ENCODE measurements at regions of chr5 and their contacts with region 1.

Region 1: DNA sequence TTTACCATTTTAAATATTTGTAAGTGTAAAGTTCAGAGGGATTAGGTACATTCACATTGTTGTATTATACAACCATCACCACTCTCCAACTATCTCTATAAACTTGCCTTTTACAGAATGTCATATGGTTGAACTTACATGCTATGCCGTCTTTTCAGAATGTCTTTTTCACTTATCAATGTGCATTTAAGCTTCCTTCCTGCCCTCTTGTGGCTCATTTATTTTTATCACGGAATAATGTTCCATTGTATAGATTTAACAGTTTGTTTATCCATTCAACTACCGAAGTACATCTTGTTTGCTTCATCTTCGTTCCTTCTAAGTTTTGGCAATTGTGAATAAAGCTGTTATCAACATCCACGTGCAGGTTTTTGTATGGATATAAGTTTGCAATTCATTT is 133.3 kb upstream of the C6 start:
- DNase-seq: no peak
- H3K4me3 ChIP-seq: no peak overlapping the region
- CTCF ChIP-seq: no peak

Region 2: DNA sequence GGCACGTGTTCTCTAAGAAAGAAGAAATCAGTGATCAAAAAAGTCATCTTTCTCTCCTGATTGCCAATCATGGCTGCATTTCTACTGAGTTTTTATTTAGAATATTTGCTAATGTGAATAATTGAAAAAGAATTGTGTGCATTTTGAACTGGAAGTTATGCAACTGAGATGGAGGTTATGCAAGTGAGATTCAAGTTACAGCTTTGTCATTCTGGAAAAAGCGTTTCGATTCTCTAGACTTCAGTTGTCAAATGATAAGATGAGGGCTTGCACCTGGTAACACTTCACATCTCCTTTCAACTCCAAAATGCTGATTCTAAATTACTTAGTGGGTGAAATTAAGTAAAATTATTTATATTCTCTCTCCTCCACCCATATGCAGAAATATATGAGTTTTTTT is 169.7 kb before region 1 on chr5:
- CTCF ChIA-PET with region 1: no interaction called
- POLR2A ChIA-PET with region 1: no interaction called
- DNase-seq: no peak
- H3K4me3 ChIP-seq: no peak overlapping the region
- CTCF ChIP-seq: no peak

Region 3: GRCh38 chr5:41312478-41313060 is 34.0 kb before region 1 on chr5:
- CTCF ChIA-PET with region 1: no interaction called
- POLR2A ChIA-PET with region 1: no interaction called
- DNase-seq: no peak
- H3K4me3 ChIP-seq: no peak overlapping the region
- CTCF ChIP-seq: no peak

Region 4: DNA sequence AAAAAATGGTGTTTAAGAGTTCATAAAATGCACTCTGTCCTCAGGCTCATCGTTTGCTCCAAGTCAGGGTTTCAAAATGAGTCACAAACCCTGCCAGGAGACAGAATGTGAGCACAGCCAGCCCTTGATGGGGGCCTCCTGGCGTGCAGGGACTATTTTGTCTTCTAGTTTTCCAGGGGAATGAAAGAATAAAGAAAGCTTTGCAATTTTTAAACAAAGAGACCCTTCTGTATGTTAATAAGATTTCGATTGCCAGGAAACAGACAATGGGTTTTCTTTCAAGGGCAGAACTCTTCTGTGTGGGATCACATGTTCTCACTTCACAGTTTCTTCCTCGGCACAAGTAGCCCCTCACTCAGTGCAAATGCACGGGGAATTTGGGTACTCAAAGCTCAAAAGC is 11.9 kb before region 1 on chr5:
- CTCF ChIA-PET with region 1: no interaction called
- POLR2A ChIA-PET with region 1: no interaction called
- DNase-seq: no peak
- H3K4me3 ChIP-seq: no peak overlapping the region
- CTCF ChIP-seq: no peak

Region 5: GRCh38 chr5:41364346-41364745 is 17.7 kb after region 1 on chr5:
- CTCF ChIA-PET with region 1: no interaction called
- POLR2A ChIA-PET with region 1: no interaction called
- DNase-seq: no peak
- H3K4me3 ChIP-seq: no peak overlapping the region
- CTCF ChIP-seq: no peak

Region 6: DNA sequence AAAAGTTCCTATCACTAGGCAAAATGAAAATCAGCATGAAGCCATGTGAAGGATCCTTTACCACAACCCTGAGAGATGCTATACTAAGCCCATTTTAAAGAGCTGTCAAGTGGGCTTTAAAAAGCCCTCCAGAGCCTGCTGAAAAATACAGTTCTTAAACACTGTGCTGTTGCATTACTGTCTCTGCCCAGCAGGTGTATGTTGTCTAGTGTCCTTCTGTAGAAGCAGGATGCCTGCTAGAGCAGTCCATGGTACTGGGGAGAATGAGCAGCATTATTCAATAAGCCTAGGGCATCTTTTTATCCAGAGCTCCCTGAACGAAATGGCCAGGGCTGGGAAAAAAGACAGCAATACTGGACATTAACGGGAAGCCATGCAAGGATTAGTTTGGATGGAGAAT is 290.0 kb after region 1 on chr5:
- CTCF ChIA-PET with region 1: interaction called, 16 read pairs
- POLR2A ChIA-PET with region 1: no interaction called
- DNase-seq: no peak
- H3K4me3 ChIP-seq: no peak overlapping the region
- CTCF ChIP-seq: peak; percentile 10

Region 7: DNA sequence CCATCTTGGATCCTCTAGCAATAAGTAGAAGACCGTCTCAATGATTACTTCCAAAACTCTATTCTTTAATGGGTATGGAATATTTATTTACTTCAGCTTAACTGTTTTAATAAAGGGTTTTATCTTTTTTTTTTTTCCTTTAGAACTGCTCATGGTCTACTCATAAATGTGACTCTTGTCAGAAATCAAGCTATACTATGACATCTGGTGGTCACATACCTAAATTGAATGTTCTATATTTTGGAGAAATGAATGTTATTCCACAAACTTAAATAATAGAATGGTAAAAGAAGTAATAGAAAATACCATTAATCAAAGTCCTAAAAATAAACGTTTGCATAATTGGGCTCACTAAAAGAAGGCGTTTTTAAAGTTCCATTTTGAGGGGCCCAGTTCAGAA is 295.0 kb after region 1 on chr5:
- CTCF ChIA-PET with region 1: interaction called, 16 read pairs
- POLR2A ChIA-PET with region 1: no interaction called
- DNase-seq: no peak
- H3K4me3 ChIP-seq: no peak overlapping the region
- CTCF ChIP-seq: no peak

Measured in AG04449 (cell line).